Heart right ventricle (tissue), 16 donors: ENCODE measurements at regions of chr6 and their contacts with region 1.

Region 1: DNA sequence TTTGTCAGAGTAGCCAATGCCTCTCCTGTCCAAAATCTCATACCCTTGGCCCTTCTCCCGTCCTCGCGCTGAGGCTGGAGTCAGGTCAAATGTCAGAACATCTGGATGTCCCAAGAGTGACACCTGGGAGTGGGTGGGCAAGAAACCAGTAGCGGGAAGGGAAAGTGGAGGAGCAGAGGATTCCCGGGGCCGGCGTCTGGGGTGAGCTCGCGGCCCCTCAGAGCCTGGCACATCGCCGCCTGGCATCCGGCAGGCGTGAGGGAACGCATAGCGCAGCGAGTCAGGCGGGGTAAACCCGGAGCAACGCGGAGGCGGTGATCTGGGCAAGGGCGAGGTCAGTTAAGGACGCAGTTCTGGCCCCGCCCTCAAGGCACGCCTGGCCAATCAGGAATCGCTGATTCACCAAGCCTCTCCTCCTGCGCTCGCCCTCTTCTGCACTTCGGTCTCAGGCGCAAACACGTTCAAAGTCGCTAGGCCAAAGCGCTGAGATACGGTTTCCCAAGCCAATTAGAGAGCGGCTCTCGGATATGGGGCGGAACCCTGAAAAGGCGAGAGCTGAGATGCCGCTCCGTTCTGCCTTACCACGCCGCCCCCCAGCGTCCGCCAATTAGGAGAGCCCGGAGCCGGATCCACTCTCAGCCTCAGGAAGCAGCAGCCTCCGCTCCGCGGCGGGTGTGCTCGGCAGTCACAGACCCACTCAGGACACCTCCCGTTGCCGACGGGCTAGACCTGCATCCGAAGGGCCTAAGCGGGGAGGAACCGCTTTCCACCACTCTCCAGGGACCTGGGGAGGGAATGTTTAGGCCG is 22.5 kb downstream of the VPS52 start:
- DNase-seq: peak; percentile 97 to 98
- ATAC-seq: peak; percentile 94 to 98 (median 97)
- H3K4me3 ChIP-seq: peak overlapping the region; percentile 22 to 76 (median 61)
- H3K27ac ChIP-seq: peak overlapping the region; percentile 82 to 96 (median 92)
- H3K4me1 ChIP-seq: peaks cover 7 to 33% (median 22%) of the 10 kb centered on the region in 9 donors
- H3K27me3 ChIP-seq: peaks cover 0 to 12% (median 0%) of the 10 kb centered on the region in 7 donors
- CTCF ChIP-seq: peak in 5 of 9 donors; percentile 28 to 56 (median 36)

Region 2: GRCh38 chr6:32047850-32048766 is 1201.0 kb before region 1 on chr6:
- intact Hi-C with region 1: no loop called
- DNase-seq: peak; percentile 64 to 77
- ATAC-seq: peak; percentile 44 to 66 (median 59)
- H3K4me3 ChIP-seq: no peak overlapping the region
- H3K27ac ChIP-seq: peak overlapping the region in 8 of 10 donors; percentile 67 to 87 (median 80)
- H3K4me1 ChIP-seq: peaks cover 7 to 32% (median 26%) of the 10 kb centered on the region in 9 donors
- H3K27me3 ChIP-seq: no peaks in the 10 kb centered on the region
- CTCF ChIP-seq: peak; percentile 68 to 90 (median 81)

Region 3: GRCh38 chr6:32933636-32934085 is 315.5 kb before region 1 on chr6:
- intact Hi-C with region 1: loop called in 1 of 10 experiments (anchors 10 kb)
- DNase-seq: peak; percentile 72 to 83
- ATAC-seq: peak; percentile 50 to 77 (median 68)
- H3K4me3 ChIP-seq: no peak overlapping the region
- H3K27ac ChIP-seq: peak overlapping the region in 1 of 10 donors; percentile 5
- H3K4me1 ChIP-seq: peaks cover 0 to 46% (median 0%) of the 10 kb centered on the region in 9 donors
- H3K27me3 ChIP-seq: no peaks in the 10 kb centered on the region
- CTCF ChIP-seq: peak; percentile 72 to 92 (median 82)

Region 4: GRCh38 chr6:33014841-33015634 is 234.1 kb before region 1 on chr6:
- intact Hi-C with region 1: loop called in 9 of 10 experiments (anchors 1 to 10 kb)
- DNase-seq: peak in 1 of 2 donors; percentile 82
- ATAC-seq: peak; percentile 41 to 75 (median 63)
- H3K4me3 ChIP-seq: peak overlapping the region in 2 of 10 donors; percentile 4
- H3K27ac ChIP-seq: peak overlapping the region in 8 of 10 donors; percentile 34 to 70 (median 56)
- H3K4me1 ChIP-seq: peaks cover 0 to 57% (median 42%) of the 10 kb centered on the region in 9 donors
- H3K27me3 ChIP-seq: peaks cover 0 to 28% (median 9%) of the 10 kb centered on the region in 7 donors
- CTCF ChIP-seq: peak; percentile 65 to 89 (median 84)

Region 5: GRCh38 chr6:33118525-33119123 is 130.5 kb before region 1 on chr6:
- intact Hi-C with region 1: loop called (anchors 1 to 10 kb)
- DNase-seq: peak in 1 of 2 donors; percentile 23
- ATAC-seq: peak in 2 of 8 donors; percentile 29 to 34
- H3K4me3 ChIP-seq: no peak overlapping the region
- H3K27ac ChIP-seq: no peak overlapping the region
- H3K4me1 ChIP-seq: peaks cover 0 to 25% (median 4%) of the 10 kb centered on the region in 9 donors
- H3K27me3 ChIP-seq: peaks cover 0 to 60% (median 43%) of the 10 kb centered on the region in 7 donors
- CTCF ChIP-seq: peak; percentile 75 to 91 (median 87)

Region 6: DNA sequence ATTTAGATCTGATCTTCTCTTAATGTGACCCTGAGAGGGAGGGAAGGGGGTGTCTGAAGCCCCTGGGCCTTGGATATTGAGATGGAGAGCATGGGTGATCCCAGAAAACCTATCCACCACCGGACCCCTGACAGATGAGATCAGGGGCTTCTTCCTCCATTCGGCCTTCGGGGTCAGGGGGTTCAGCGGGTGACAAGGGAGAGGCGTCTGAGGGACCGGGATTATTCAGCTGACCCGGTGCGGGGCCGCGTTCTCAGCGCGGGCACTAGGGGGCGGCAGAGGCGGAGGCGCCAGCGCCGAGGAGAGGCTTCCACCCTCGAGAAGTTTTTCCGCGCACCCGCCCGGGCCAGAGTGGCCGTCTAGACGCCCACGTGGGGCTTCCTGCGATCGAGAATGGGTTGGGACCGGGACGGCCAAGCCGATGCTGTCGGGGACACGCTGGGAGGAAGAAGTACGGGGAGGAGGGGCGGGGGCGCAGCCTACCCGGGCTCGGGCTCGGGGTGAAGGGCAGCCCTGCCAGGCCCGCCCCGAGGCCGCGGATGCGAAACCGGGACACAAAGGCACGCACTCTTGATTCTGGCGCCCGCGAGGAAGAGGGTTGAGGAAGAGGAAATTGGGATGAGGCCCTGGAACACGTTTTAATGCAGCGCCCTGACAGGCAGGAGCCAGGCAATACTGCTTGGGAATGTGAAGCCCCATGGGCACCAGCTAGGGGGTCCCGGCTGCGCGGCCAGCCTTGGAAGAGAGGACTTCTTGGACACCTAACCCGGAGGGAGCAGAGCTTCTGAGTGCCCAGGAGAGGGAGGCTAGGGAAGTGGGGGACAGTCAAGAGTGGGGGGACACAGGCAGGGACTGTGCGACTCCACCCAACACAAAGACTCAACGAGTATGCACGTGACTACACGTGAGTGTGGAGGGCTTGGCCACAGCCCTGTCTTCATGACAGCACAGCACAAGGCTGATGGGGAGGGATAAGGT is 87.5 kb before region 1 on chr6:
- intact Hi-C with region 1: loop called (anchors 1 to 5 kb)
- DNase-seq: peak; percentile 77 to 86
- ATAC-seq: peak; percentile 83 to 96 (median 91)
- H3K4me3 ChIP-seq: peak overlapping the region; percentile 44 to 60 (median 55)
- H3K27ac ChIP-seq: peak overlapping the region in 7 of 10 donors; percentile 22 to 55 (median 44)
- H3K4me1 ChIP-seq: peaks cover 0 to 21% (median 7%) of the 10 kb centered on the region in 9 donors
- H3K27me3 ChIP-seq: no peaks in the 10 kb centered on the region
- CTCF ChIP-seq: peak; percentile 93 to 100 (median 95)

Region 7: DNA sequence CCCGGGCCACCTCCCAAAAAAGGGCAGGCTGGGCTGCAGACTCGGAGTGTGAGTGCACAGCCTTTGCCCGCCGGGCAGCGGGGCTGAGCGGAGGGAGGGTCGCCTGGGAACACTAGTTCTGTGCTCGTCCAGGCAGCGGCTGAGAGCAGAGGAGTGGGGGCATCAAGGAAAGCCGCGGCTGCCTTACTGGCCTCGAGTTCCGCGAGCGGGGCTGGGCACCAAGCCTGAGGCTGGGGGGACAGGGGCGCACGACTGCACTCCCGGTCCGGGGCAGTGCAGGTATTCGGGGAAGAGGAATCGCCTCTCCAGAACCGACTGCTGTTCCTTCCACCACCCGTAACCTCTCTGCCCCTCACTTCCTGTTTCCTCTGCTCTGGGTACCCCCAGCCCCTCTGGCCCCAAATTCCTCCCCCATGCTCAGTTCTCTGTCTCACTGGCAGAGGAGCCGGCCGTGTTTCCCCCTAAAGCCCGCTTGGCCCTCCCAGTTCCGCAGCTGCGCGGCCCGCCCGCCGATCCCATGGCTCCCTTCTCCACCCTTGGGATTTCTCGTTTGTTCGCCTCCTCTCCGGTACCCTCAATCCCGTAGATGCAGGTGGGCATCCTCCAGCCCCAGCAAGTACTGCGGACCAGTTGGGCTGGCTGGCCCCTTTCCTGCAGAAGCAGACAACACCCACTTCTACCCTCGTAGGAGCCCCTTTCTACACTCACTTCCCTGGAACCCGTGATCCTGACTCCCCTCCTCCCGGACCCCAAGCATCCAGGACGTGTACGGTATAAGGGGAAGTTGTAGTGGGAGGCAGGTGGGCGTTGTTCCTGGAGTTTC is 35.8 kb before region 1 on chr6:
- intact Hi-C with region 1: loop called in 1 of 10 experiments (anchors 5 kb)
- DNase-seq: no peak
- ATAC-seq: peak; percentile 35 to 79 (median 58)
- H3K4me3 ChIP-seq: peak overlapping the region; percentile 37 to 70 (median 55)
- H3K27ac ChIP-seq: peak overlapping the region in 8 of 10 donors; percentile 13 to 72 (median 32)
- H3K4me1 ChIP-seq: peaks cover 2 to 35% (median 21%) of the 10 kb centered on the region in 9 donors
- H3K27me3 ChIP-seq: peaks cover 0 to 16% (median 0%) of the 10 kb centered on the region in 7 donors
- CTCF ChIP-seq: no peak

Region 8: DNA sequence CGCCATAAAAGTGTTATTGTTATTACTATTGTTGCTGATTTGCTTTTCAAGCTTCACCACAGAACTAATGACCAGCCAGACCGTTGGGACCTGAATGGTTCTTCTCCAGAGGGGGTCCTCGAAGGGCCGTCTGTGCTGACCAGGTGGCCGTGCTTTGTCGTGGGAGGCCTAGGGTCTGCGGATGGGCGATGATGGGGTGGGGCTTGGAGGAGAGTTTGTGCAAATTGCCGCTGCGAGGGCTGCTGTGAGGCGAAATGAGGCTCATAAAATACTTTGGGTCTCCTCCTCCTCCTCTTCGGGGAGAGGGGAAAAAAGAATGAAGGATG is 74.5 kb after region 1 on chr6:
- intact Hi-C with region 1: loop called in 1 of 10 experiments (anchors 1 kb)
- DNase-seq: peak in 1 of 2 donors; percentile 33
- ATAC-seq: no peak
- H3K4me3 ChIP-seq: peak overlapping the region; percentile 14 to 81 (median 69)
- H3K27ac ChIP-seq: peak overlapping the region in 9 of 10 donors; percentile 80 to 93 (median 89)
- H3K4me1 ChIP-seq: peaks cover 15 to 50% (median 40%) of the 10 kb centered on the region in 9 donors
- H3K27me3 ChIP-seq: no peaks in the 10 kb centered on the region
- CTCF ChIP-seq: no peak

Region 9: DNA sequence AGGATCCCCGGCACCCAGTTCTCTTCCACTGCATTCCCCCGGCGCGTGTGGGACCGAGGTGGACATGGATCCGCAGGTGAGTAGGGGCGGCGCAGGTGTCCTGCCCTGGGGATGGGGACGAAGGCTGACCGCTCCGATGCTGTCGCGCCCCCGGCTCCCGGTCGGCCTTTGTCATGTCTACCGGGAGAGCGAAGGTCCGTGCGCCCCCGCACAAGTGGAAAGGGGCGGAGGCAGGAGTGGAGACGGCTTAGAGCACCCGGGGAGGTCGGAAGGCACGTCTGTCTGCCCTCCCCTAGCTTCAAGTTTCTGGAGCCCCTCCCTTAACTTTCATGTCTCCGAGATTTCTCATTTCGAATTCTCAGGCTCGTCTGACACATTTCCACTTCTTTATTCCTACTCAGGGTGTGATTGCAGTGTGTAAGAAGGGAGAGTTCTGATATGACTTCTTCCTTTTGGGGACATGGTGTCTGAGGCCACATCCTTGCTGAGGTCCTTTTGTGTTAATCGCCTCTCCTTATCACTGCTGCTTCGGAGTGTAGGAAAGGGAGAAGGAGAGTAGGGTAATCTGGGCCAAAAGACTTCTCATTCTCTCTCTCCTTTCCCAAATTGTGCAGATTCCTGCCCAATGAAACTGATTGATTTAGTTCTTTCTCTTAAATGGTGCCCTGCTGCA is 142.9 kb after region 1 on chr6:
- intact Hi-C with region 1: no loop called
- DNase-seq: no peak
- ATAC-seq: peak in 1 of 8 donors; percentile 0
- H3K4me3 ChIP-seq: peak overlapping the region in 9 of 10 donors; percentile 42 to 76 (median 59)
- H3K27ac ChIP-seq: peak overlapping the region in 7 of 10 donors; percentile 11 to 93 (median 86)
- H3K4me1 ChIP-seq: peaks cover 6 to 41% (median 9%) of the 10 kb centered on the region in 9 donors
- H3K27me3 ChIP-seq: no peaks in the 10 kb centered on the region
- CTCF ChIP-seq: no peak